Activated CD8-positive, alpha-beta T cell treated with anti-CD3 and anti-CD28 coated beads for 36 hours (primary cell): ENCODE measurements at regions of chr19 and their contacts with region 1.

Region 1: DNA sequence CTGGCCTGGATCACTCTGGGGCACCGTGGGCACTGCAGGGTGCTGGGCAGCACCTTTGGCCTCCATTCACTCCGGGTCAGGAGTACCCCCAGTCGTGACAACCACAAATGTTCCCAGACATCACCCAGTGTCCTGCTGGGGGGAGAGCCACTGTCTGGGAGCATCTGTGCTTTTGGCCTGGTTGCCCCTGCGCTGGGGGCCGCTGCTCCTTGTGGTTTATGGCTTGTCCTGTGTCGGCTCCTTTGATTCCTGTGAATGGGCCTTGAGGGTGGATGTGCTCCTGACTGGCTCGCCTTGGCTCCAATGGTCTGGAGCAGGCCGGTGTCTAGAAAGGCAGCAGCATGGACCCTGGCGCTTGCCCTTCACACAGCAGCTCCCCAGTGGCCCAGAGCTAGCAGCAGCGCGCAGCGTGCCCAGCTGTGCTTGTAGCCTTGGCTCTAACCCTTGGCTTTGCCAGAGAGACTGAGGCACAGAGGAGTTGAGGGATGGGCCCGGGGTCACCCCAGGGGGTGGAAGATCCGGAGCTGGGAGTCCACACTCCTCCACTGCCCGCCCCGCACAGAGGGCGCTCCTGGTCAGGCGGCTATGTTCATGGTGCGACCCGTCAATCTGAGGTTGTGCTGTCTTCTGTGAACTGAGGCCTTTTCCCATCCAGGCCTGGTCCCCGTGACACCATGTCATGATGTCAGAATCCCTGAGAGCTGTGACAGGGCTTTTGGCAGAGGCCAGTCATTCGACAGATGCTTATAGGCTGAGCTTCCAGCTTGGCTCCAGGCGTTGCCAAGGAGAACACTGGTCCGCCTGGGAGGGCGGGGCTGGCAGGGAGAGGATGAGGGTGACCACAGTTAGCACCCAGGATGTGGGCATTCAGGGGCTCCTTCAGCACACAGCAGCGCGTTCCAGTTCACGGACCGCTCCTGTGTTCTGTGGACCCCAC is 4.1 kb downstream of the DAZAP1 start:
- DNase-seq: peak; percentile 56
- ATAC-seq: no peak
- H3K4me3 Mint-ChIP-seq: peak overlapping the region; percentile 95
- H3K27ac Mint-ChIP-seq: peak overlapping the region; percentile 94
- H3K4me1 Mint-ChIP-seq: peaks cover 72% of the 10 kb centered on the region
- H3K27me3 Mint-ChIP-seq: no peaks in the 10 kb centered on the region
- CTCF ChIP-seq: no peak

Region 2: GRCh38 chr19:1438035-1438932 is 26.8 kb after region 1 on chr19 and contains the start of gene RPS15:
- CTCF ChIA-PET with region 1: interaction called, 3 read pairs
- POLR2A ChIA-PET with region 1: interaction called, 10 read pairs
- intact Hi-C with region 1: no loop called
- DNase-seq: peak; percentile 96
- ATAC-seq: peak; percentile 95
- H3K4me3 Mint-ChIP-seq: peak within 1 kb of the TSS; percentile 93
- H3K27ac Mint-ChIP-seq: peak within 1 kb of the TSS; percentile 99
- H3K4me1 Mint-ChIP-seq: peaks cover 29% of the 10 kb centered on the region
- H3K27me3 Mint-ChIP-seq: no peaks in the 10 kb centered on the region
- CTCF ChIP-seq: peak; percentile 95
- total RNA-seq, gene RPS15: 1,854 to 1,879 TPM